Astrocyte of the cerebellum (primary cell): ENCODE measurements at regions of chr12 and their contacts with region 1.

Region 1: DNA sequence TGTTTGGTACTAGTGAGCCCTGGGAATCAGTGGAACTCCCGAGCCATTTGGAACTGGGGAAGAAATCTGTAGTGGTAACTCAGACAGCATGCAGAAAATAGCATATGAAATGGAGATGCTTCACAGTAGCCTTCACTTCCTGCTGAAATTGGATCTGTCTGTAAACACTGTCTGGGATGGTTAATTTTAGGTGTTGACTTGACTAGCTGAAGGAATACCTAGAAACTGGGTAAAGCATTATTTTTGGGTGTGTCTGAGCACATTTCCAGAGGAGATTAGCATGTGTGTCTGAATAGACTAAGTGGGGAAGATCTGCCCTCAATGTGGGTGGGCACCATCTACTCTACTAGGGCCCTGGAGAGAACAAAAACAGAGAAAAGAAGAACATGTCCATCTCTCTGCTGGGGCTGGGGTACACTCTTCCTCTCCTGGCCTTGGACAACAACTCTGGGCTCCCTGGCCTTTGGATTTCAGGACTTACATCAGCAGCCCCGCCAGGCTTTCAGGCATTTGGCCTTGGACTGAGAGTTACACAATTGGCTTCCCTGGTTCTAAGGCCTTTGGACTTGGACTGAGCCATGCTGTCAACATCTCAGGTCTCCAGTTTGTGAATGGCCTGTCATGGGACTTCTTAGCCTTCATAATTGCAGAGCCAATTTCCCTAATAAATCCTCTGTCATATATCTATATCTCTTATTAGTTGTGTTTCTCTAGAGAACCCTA is 14.0 kb upstream of the CRADD start:
- DNase-seq: no peak
- H3K4me3 ChIP-seq: no peak overlapping the region
- CTCF ChIP-seq: no peak

Region 2: DNA sequence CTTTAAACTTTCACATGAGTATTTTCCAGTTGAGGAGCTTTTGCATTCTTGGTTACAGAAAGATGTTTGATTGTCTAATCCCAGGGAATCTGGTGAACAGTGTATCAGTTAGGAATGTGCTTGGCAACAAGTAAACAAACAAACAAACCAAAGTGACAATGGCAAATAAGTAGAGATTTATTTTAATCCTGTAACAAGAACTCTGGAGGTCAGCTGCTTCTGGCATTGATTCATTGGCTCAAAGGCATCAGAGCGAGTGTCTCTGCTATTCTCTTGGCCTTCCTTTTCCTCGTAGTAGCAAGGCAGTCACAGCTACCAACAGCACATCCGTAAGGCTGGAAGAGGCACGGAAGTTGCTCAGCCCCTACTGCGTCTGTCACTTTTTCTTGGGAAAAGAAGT is 51.2 kb after region 1 on chr12:
- in situ Hi-C with region 1: loop called (anchors 5 kb)
- DNase-seq: no peak
- H3K4me3 ChIP-seq: no peak overlapping the region
- CTCF ChIP-seq: no peak

Region 3: DNA sequence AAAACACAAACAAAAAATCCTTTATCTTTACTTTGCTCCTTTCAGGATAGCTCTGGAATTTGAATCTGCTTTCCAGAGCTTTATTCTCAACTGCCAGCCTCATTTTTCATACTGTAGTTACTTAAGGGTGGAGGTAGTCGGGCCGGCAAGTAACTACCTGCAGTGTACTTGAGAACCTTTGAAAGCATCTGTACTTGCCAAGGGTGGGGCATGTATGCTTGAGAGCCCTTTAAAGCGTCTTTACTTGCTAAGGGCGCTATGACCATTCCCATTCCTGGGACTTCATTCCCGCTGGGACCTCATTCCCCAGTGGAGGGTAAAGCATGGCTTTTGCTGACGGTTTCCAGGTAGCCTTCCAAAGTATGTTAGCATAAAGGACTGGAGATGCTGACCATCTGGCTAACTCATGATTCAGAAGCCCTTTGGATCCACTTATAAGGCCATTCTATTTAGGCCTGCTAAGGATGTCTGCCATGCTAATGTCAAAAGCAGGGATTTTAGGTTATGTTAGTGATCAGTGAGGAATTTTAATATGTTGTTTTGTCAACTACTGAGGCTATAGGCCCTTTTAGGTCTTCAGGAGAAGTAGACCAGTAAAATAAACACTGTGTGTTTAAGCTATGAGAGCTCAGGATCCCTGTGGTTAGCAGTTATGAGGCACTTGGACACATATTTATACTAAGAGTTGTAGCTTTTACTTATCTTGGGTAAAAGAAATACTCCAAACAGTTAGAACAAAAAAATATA is 88.9 kb after region 1 on chr12:
- in situ Hi-C with region 1: no loop called
- DNase-seq: peak; percentile 66
- H3K4me3 ChIP-seq: no peak overlapping the region
- CTCF ChIP-seq: no peak